GM12878 (cell line): ENCODE measurements at regions of chr1 and their contacts with region 1.

Region 1: GRCh38 chr1:236103646-236104218 is 38.6 kb upstream of the GPR137B start:
- DNase-seq: no peak
- ATAC-seq: peak; percentile 85
- H3K4me3 ChIP-seq: no peak overlapping the region
- H3K27ac ChIP-seq: no peak overlapping the region
- H3K4me1 ChIP-seq: no peaks in the 10 kb centered on the region
- H3K27me3 ChIP-seq: no peaks in the 10 kb centered on the region
- CTCF ChIP-seq: peak; percentile 53 to 90 (median 71)
- EP300 ChIP-seq: no peak
- POLR2A ChIP-seq: no peak
- RAD21 ChIP-seq: peak; percentile 91

Region 2: GRCh38 chr1:236018885-236019453 is 84.8 kb before region 1 on chr1:
- CTCF ChIA-PET with region 1: no interaction called
- POLR2A ChIA-PET with region 1: no interaction called
- RAD21 ChIA-PET with region 1: no interaction called
- SMC1A ChIA-PET with region 1: no interaction called
- in situ Hi-C with region 1: no loop called
- intact Hi-C with region 1: no loop called
- DNase-seq: no peak
- ATAC-seq: no peak
- H3K4me3 ChIP-seq: no peak overlapping the region
- H3K27ac ChIP-seq: no peak overlapping the region
- H3K4me1 ChIP-seq: no peaks in the 10 kb centered on the region
- H3K27me3 ChIP-seq: no peaks in the 10 kb centered on the region
- CTCF ChIP-seq: no peak
- EP300 ChIP-seq: no peak
- POLR2A ChIP-seq: no peak
- RAD21 ChIP-seq: no peak

Region 3: DNA sequence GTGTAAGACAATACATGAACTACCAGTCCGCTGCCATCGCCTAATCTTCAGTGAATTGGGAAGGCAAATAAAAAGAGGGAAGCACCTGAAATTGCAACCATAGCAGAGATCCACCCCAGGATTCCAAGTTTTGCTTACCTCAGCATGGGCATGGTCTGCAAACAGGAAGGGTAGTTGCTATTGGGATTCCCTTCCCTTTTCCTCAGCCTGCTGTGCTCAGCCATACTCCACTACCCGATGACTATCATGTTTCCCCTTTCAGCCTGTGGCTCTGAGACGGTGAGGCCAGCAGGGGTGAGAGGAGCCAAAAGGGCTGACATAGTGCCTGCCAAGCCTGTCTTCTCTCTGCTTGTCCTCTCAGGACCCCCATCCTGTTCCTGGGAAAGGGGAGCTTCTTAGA is 102.8 kb after region 1 on chr1:
- CTCF ChIA-PET with region 1: interaction called, 4 read pairs
- POLR2A ChIA-PET with region 1: no interaction called
- RAD21 ChIA-PET with region 1: no interaction called
- SMC1A ChIA-PET with region 1: no interaction called
- in situ Hi-C with region 1: no loop called
- intact Hi-C with region 1: loop called (anchors 10 kb)
- DNase-seq: no peak
- ATAC-seq: no peak; the same call in 2 of the 3 replicates
- H3K4me3 ChIP-seq: no peak overlapping the region
- H3K27ac ChIP-seq: no peak overlapping the region
- H3K4me1 ChIP-seq: no peaks in the 10 kb centered on the region
- H3K27me3 ChIP-seq: no peaks in the 10 kb centered on the region
- CTCF ChIP-seq: no peak
- EP300 ChIP-seq: no peak
- POLR2A ChIP-seq: peak; percentile 59
- RAD21 ChIP-seq: no peak

Region 4: DNA sequence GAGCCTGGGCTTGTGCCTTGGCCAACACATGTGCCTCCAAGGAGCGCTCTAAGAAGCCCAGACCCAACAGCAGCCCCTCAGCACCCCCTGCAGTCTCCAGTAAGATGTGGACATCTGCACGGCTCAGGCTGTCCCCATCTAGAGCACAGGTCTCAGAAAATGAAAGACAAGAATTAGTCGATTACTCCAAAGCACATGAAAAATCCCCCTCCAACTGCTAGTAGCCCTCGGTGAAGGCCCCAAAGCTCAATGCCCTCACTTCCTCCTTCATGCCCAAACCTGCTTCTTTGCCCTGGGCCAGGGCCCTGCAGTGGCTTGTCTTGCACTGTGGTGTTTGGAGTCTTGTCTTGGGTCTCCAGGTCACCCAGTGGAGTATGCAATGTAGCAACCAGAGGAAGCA is 200.0 kb after region 1 on chr1:
- CTCF ChIA-PET with region 1: interaction called, 12 read pairs
- POLR2A ChIA-PET with region 1: no interaction called
- RAD21 ChIA-PET with region 1: interaction called, 3 read pairs
- SMC1A ChIA-PET with region 1: interaction called, 4 read pairs
- in situ Hi-C with region 1: loop called (anchors 25 kb)
- intact Hi-C with region 1: loop called (anchors 5 kb)
- DNase-seq: peak; percentile 30
- ATAC-seq: peak; percentile 95
- H3K4me3 ChIP-seq: no peak overlapping the region
- H3K27ac ChIP-seq: no peak overlapping the region
- H3K4me1 ChIP-seq: peaks cover 10% of the 10 kb centered on the region
- H3K27me3 ChIP-seq: no peaks in the 10 kb centered on the region
- CTCF ChIP-seq: peak; percentile 26 to 53 (median 50); a peak in 4 of 6 replicates
- EP300 ChIP-seq: no peak
- POLR2A ChIP-seq: no peak
- RAD21 ChIP-seq: peak; percentile 84

Region 5: GRCh38 chr1:236489710-236490377 is 386.1 kb after region 1 on chr1:
- CTCF ChIA-PET with region 1: interaction called, 10 read pairs
- POLR2A ChIA-PET with region 1: no interaction called
- RAD21 ChIA-PET with region 1: interaction called, 13 read pairs
- SMC1A ChIA-PET with region 1: interaction called, 30 read pairs
- in situ Hi-C with region 1: no loop called
- intact Hi-C with region 1: loop called (anchors 1 kb)
- DNase-seq: peak; percentile 19
- ATAC-seq: peak; percentile 87
- H3K4me3 ChIP-seq: no peak overlapping the region
- H3K27ac ChIP-seq: no peak overlapping the region
- H3K4me1 ChIP-seq: no peaks in the 10 kb centered on the region
- H3K27me3 ChIP-seq: 0 out of 4 replicates have a peak, but pooled peaks cover 0 to 3% of the 10 kb centered on the region in 2 experiments
- CTCF ChIP-seq: peak in 2 of 3 experiments; percentile 46 to 55; a peak in 3 of 6 replicates
- EP300 ChIP-seq: no peak
- POLR2A ChIP-seq: no peak
- RAD21 ChIP-seq: peak; percentile 72

Region 6: DNA sequence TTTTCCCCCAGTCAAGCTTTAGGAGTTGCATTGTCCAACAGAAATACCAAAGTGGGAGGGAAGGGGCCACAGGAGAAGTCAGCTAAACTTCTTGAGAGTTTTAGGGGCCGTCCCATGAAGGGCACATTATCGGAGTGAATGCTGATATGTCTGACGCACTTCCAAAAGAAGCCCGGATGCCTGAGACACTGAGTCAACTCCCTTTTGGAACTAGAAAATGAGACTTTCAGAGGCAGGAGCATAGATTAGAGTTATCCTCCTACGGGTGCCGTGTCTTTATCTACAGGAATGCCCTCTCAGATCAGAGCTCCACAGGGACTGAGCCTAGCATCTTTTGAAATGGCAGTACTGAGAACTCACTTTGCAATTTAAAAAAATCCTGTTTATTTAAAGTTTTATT is 595.6 kb after region 1 on chr1:
- CTCF ChIA-PET with region 1: no interaction called
- POLR2A ChIA-PET with region 1: no interaction called
- RAD21 ChIA-PET with region 1: no interaction called
- SMC1A ChIA-PET with region 1: no interaction called
- in situ Hi-C with region 1: no loop called
- intact Hi-C with region 1: no loop called
- DNase-seq: no peak
- ATAC-seq: no peak
- H3K4me3 ChIP-seq: no peak overlapping the region
- H3K27ac ChIP-seq: no peak overlapping the region
- H3K4me1 ChIP-seq: no peaks in the 10 kb centered on the region
- H3K27me3 ChIP-seq: peaks cover 2% of the 10 kb centered on the region in 2 experiments; a peak in 1 of 4 replicates
- CTCF ChIP-seq: no peak
- EP300 ChIP-seq: no peak
- POLR2A ChIP-seq: no peak
- RAD21 ChIP-seq: no peak

Region 7: GRCh38 chr1:237124856-237125462 is 1021.2 kb after region 1 on chr1:
- CTCF ChIA-PET with region 1: no interaction called
- POLR2A ChIA-PET with region 1: no interaction called
- RAD21 ChIA-PET with region 1: no interaction called
- SMC1A ChIA-PET with region 1: no interaction called
- in situ Hi-C with region 1: loop called (anchors 25 kb)
- intact Hi-C with region 1: loop called (anchors 10 kb)
- DNase-seq: no peak
- ATAC-seq: peak; percentile 65
- H3K4me3 ChIP-seq: no peak overlapping the region
- H3K27ac ChIP-seq: no peak overlapping the region
- H3K4me1 ChIP-seq: no peaks in the 10 kb centered on the region
- H3K27me3 ChIP-seq: no peaks in the 10 kb centered on the region
- CTCF ChIP-seq: peak; percentile 51 to 63 (median 53); a peak in 5 of 6 replicates
- EP300 ChIP-seq: no peak
- POLR2A ChIP-seq: no peak
- RAD21 ChIP-seq: 0 out of 2 replicates have a peak, but pooled peaks have one; percentile 17

Region 8: GRCh38 chr1:237562242-237562823 is 1458.6 kb after region 1 on chr1:
- CTCF ChIA-PET with region 1: no interaction called
- POLR2A ChIA-PET with region 1: no interaction called
- RAD21 ChIA-PET with region 1: no interaction called
- SMC1A ChIA-PET with region 1: no interaction called
- in situ Hi-C with region 1: loop called (anchors 10 kb)
- intact Hi-C with region 1: loop called (anchors 10 kb)
- DNase-seq: peak; percentile 4
- ATAC-seq: peak; percentile 93
- H3K4me3 ChIP-seq: no peak overlapping the region
- H3K27ac ChIP-seq: no peak overlapping the region
- H3K4me1 ChIP-seq: no peaks in the 10 kb centered on the region
- H3K27me3 ChIP-seq: no peaks in the 10 kb centered on the region
- CTCF ChIP-seq: peak; percentile 31 to 52 (median 52); a peak in 5 of 6 replicates
- EP300 ChIP-seq: no peak
- POLR2A ChIP-seq: no peak
- RAD21 ChIP-seq: peak; percentile 47